GM18951 (cell line): ENCODE measurements at regions of chr19 and their contacts with region 1.

Region 1: GRCh38 chr19:14198384-14199376 is 7.3 kb downstream of the ADGRL1 start:
- POLR2A ChIP-seq: no peak

Region 2: DNA sequence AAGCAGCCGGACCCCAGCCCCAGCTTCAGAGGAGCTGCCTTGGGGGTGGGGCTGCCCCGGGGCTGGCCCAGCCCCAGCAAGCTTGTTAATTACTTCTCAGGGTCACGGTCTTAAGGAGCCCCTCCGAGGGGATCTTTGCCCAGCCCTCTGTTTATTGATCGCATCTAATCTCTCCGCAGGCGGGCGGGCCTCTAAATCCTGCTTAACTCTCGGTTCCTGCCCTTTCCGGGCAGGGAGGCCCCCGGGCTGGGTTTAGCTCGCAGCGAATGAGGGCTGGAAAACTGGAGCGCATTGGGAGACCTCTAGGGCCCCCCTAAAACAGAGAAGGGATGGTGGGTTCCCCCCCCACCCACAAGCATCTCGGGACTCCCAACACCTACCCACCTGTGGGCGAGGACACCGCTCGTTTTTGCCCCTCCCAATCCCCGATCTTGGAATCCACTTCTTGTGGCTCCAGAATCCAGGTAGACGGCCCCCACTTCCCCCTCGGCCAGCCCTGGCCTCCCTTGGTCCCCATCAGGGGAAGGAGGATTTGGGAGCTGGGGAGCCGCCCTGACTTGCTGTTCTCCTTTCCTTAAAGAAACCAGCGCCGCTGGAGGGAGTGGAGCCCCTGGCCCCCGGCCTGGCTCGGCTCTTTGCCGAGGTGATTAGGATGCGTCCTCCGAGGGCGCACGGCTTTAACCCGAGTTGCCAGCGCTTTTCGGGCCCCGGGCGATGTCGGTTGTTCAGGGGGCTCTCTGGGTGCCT is 66.8 kb after region 1 on chr19:
- in situ Hi-C with region 1: no loop called
- POLR2A ChIP-seq: no peak

Region 3: DNA sequence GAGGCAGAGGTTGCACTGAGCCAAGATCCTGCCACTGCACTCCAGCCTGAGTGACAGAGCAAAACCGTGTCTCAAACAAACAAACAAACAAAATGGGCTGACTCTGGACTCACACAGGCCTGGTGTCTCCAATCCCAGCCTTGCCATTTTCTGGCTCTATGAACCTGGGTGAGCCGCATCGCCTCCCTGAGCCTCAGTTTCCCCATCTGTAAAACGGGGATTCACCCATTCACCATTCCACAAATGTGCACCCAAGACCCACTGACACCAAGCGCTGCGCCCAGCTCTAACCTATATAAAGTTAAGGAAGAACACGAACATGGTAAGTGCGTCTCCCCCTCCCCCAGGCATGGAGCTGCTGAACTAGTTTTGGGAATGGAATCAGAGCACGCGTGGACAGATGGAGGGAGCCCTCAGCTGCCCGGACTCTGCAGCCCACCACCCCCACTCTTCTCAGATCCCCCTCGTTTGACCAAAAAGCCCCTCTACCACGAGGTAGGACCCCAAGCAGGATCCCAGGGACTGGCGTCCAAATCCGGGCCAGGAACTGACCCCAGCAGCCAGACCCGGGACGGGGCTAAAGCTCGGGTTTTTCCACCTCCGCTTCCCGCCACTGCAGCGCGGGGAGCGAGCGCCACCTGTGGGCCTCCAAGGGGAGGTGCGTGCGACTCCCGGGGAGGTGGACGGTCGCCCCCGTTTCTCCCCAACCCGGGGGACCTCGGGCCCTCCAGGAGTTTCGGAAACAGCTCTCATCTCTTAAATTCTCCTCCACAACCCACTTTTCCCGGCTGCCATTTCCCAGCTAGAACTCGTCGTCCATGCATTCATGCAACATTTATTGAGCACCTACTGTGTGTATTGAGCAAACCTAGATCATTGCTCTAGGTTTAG is 149.6 kb after region 1 on chr19:
- in situ Hi-C with region 1: loop called (anchors 10 kb)
- POLR2A ChIP-seq: no peak

Region 4: DNA sequence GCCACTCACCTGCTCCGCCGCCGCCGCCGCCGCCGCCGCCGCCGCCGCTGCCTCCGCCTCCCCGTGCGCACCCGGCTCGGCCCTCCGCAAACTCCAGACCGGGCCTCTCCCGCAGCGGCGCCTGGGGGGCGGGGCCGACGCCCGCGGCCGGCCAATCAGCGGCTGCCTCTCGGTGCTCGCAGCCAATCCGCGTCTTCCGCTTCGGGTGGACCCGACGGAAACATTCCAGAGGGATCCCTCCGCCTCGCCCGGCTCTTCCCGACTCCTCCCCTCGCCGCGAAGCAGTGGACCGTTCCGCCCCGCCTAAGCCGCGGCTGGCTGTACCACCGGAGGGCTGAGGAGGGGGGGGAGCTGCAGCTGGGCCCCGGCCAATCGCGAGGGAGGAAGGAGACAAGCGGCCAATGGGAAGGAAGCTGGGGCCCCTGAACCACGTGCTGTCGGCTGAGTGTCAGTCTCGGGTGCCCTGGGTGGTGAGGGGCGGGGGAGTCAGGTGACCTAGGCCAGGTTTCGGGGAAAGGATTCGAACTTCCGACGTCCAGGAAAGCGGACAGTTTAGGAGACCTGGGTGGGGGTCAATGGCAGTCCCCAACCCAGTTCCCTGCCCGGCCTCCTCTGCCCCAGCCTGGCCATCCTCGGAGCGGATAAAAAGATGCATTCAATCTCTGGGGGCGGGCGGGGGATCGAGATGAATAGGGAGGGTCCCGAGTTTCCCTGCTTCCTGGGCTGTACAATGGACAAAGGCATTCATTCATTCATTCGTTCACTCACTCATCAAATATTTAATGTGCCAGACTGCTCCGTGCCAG is 297.6 kb after region 1 on chr19 and contains the start of gene GIPC1:
- in situ Hi-C with region 1: loop called (anchors 25 kb)
- POLR2A ChIP-seq: peak; percentile 28

Region 5: DNA sequence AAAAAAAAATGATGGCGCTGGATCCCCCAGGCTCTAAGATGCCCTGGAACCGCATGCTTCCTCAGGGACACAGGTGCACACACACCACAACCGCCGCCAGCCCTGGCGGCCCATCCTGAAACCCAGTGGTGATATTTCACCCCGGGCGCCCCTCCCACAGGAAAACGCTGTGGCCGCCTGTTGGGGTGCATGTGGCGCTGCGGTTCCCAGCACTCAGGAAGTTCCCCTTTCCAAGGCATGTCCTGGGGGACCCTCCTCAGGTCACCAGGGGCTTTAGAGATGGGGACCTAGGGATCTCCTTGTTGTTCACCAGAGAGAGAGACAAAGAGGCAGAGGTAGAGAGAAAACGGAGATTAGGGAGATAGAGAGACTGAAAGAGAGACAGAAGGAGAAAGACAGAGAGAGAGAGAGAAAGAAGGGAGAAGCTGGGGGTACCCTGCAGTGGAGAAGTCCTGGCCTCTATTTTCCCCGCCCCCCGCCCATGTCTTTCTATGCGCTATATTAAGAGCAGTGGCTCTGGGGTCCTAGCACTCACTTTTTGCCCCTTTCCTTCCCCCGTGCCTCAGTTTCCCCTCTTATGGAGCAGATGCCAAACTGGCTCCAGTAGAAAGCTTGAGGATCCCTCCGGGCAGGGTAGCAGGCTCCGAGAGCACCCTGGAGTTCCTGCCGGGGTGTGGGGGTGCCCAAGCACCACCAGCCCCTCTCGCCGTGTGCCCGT is 577.3 kb after region 1 on chr19:
- in situ Hi-C with region 1: no loop called
- POLR2A ChIP-seq: no peak